Heart left ventricle (tissue), 16 donors: ENCODE measurements at regions of chr3 and their contacts with region 1.

Region 1: DNA sequence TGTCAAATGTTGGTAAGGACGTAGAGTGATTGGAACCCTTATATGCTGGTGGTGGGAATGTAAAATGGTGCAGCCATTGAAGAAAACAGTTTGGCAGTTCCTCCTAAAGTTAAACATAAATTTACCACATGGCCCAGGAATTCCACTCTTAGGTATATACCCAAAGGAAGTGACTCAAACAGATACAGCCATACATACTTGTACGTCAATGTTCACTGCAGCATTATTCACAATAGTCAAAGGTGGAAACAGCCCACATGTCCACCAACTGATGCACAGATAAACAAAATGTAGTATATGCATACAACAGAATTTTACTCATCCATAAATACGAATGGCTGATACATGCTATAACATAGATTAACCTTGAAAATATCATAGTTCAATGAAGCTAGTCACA is 13.2 kb downstream of the CLASP2 start:
- DNase-seq: no peak
- ATAC-seq: no peak
- H3K4me3 ChIP-seq: no peak overlapping the region
- H3K27ac ChIP-seq: no peak overlapping the region
- H3K4me1 ChIP-seq: peaks cover 0 to 5% (median 0%) of the 10 kb centered on the region in 12 donors
- H3K27me3 ChIP-seq: no peaks in the 10 kb centered on the region
- CTCF ChIP-seq: no peak
- POLR2A ChIP-seq: no peak

Region 2: GRCh38 chr3:33665294-33665693 is 39.6 kb before region 1 on chr3:
- intact Hi-C with region 1: loop called in 1 of 10 experiments (anchors 5 kb)
- DNase-seq: no peak
- ATAC-seq: no peak
- H3K4me3 ChIP-seq: no peak overlapping the region
- H3K27ac ChIP-seq: no peak overlapping the region
- H3K4me1 ChIP-seq: peaks cover 0 to 17% (median 3%) of the 10 kb centered on the region in 12 donors
- H3K27me3 ChIP-seq: no peaks in the 10 kb centered on the region
- CTCF ChIP-seq: no peak
- POLR2A ChIP-seq: no peak

Region 3: GRCh38 chr3:33915791-33916546 is 211.1 kb after region 1 on chr3:
- intact Hi-C with region 1: no loop called
- DNase-seq: peak in 2 of 5 donors; percentile 32 to 34
- ATAC-seq: peak in 3 of 4 donors; percentile 56 to 78 (median 71)
- H3K4me3 ChIP-seq: no peak overlapping the region
- H3K27ac ChIP-seq: no peak overlapping the region
- H3K4me1 ChIP-seq: peaks cover 0 to 4% (median 0%) of the 10 kb centered on the region in 12 donors
- H3K27me3 ChIP-seq: no peaks in the 10 kb centered on the region
- CTCF ChIP-seq: peak in 10 of 12 donors; percentile 11 to 39 (median 32)
- POLR2A ChIP-seq: no peak

Region 4: DNA sequence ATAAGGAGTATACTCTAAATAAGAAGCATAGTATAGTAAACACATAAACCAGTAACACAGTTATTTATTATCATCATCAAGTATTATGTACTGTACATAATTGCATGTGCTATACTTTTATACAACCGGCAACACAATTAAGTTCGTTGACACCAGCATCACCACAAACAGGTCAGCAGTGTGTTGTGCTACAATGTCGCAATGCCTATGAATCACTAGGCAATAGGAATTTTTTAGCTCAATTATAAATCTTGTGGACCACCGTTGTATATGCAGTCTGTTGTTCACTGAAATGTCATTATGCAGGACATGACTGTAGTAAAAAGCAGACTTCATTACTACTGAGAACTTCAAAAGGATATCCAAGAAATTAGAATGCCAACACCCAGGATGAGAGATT is 270.6 kb after region 1 on chr3:
- intact Hi-C with region 1: no loop called
- DNase-seq: no peak
- ATAC-seq: no peak
- H3K4me3 ChIP-seq: no peak overlapping the region
- H3K27ac ChIP-seq: no peak overlapping the region
- H3K4me1 ChIP-seq: no peaks in the 10 kb centered on the region
- H3K27me3 ChIP-seq: no peaks in the 10 kb centered on the region
- CTCF ChIP-seq: no peak
- POLR2A ChIP-seq: no peak